Caco-2 (cell line): ENCODE measurements at regions of chr2 and their contacts with region 1.

Region 1: GRCh38 chr2:48589170-48589767 is 28.4 kb upstream of the GTF2A1L start:
- DNase-seq: peak in 1 of 2 experiments; percentile 61
- H3K4me3 ChIP-seq: no peak overlapping the region
- H3K4me3 Mint-ChIP-seq: no peak overlapping the region
- H3K27ac Mint-ChIP-seq: peak overlapping the region; percentile 29
- H3K4me1 ChIP-seq: peaks cover 21% of the 10 kb centered on the region
- H3K4me1 Mint-ChIP-seq: peaks cover 24% of the 10 kb centered on the region
- H3K27me3 ChIP-seq: no peaks in the 10 kb centered on the region
- H3K27me3 Mint-ChIP-seq: no peaks in the 10 kb centered on the region
- CTCF ChIP-seq: peak; percentile 75 to 85

Region 2: DNA sequence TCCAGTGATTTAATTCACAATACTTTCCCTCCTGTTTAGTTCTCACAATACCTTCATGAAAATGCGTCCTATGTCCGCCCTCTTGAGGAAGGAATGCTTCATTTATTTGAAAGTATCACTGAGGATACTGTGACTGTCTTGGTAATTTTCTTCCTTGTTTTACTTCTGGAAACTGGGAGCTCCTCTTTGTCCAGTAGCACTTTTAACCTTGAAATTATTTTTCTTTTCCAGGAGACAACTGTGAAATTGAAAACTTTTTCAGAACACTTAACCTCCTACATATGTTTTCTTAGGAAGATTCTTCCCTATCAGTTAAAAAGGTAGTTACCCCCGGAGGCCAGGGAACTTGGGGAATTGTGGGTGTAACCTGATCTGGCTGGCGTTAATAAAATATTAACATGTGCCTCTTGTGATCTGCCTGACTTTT is 118.2 kb before region 1 on chr2:
- CTCF ChIA-PET with region 1: no interaction called
- POLR2A ChIA-PET with region 1: no interaction called
- intact Hi-C with region 1: loop called (anchors 2 kb)
- DNase-seq: peak in 1 of 2 experiments; percentile 75
- H3K4me3 ChIP-seq: no peak overlapping the region
- H3K4me3 Mint-ChIP-seq: no peak overlapping the region
- H3K27ac Mint-ChIP-seq: no peak overlapping the region
- H3K4me1 ChIP-seq: peaks cover 8% of the 10 kb centered on the region; the same call in 1 of the 2 replicates
- H3K4me1 Mint-ChIP-seq: no peaks in the 10 kb centered on the region
- H3K27me3 ChIP-seq: no peaks in the 10 kb centered on the region
- H3K27me3 Mint-ChIP-seq: no peaks in the 10 kb centered on the region
- CTCF ChIP-seq: peak; percentile 73 to 80

Region 3: DNA sequence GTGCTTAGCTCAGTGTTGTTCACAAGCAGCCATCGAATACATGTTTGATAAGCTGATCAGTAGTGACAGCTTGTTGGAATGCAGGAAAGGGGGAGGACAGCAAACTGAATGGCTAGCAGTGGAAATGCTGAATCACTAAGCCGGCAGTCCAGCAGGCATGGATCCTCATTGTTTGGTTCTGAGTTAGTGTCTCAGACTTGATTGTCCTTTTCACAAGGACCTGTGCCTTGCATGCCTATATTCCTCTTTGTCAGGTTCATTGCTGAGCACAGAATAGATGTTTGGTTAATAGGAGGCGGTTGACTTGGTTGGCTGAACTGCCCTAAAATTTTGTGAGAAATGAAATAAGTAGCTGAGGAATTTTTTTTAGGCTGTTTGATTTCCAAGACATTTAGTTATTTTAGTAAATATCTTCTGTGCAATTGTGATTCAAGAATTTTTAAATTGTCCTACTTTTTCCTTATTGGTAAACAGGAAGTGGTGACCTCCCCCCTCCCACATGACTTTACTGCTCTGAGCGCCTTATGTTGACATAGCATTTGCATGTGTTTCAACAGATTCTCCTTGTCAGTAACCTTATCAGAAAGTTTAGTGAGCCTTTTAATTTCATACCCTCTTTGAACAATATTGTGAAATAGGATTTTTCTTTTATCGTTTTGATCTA is 80.7 kb before region 1 on chr2:
- CTCF ChIA-PET with region 1: no interaction called
- POLR2A ChIA-PET with region 1: no interaction called
- intact Hi-C with region 1: loop called (anchors 2 kb)
- DNase-seq: peak; percentile 49 to 54
- H3K4me3 ChIP-seq: no peak overlapping the region
- H3K4me3 Mint-ChIP-seq: peak overlapping the region; percentile 29
- H3K27ac Mint-ChIP-seq: peak overlapping the region; percentile 80
- H3K4me1 ChIP-seq: peaks cover 18% of the 10 kb centered on the region
- H3K4me1 Mint-ChIP-seq: peaks cover 13% of the 10 kb centered on the region
- H3K27me3 ChIP-seq: no peaks in the 10 kb centered on the region
- H3K27me3 Mint-ChIP-seq: no peaks in the 10 kb centered on the region
- CTCF ChIP-seq: no peak

Region 4: DNA sequence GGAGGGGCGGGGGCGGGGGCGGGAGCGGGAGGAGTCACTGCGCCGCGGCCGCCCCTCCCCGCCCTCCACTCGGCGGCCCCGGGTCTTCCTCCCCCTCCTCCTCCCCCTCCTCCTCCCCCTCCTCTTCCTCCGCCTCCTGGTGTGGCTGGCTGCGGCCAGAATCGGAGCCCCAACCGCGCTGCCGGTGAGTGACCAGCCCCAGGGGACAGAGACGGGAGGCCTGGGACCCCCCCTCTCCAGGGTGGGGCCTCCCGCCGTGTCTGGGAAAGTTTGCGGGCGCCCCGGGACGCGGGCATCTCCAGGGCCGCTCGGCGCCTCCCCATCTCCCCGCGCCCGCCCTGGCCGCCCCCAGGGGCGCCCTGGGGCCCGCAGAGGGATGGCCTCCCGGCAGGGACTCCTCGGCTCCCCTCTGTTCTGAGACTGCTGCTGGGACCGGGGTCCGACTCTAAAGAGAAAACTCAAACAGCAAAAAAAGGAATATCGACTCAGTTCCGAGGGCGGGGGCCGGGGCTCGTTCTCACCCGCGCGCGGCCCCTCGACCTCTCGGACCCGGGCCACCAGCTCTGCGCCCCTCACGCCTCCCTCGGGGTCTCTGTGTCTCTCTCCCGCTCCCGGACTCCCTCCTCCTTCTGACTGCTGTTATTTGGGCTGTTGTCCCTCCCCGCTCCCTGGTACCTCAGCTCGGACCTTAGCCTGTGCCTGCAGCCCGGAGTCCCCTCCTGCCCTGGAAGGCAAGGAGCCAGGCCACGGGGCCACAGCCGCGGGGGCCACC is 59.0 kb before region 1 on chr2 and contains the start of gene STON1:
- CTCF ChIA-PET with region 1: no interaction called
- POLR2A ChIA-PET with region 1: no interaction called
- intact Hi-C with region 1: loop called (anchors 2 kb)
- DNase-seq: peak; percentile 42 to 45
- H3K4me3 ChIP-seq: peak within 1 kb of the TSS; percentile 61
- H3K4me3 Mint-ChIP-seq: peak within 1 kb of the TSS; percentile 82
- H3K27ac Mint-ChIP-seq: no peak within 1 kb of the TSS
- H3K4me1 ChIP-seq: no peaks in the 10 kb centered on the region
- H3K4me1 Mint-ChIP-seq: peaks cover 7% of the 10 kb centered on the region
- H3K27me3 ChIP-seq: no peaks in the 10 kb centered on the region
- H3K27me3 Mint-ChIP-seq: no peaks in the 10 kb centered on the region
- CTCF ChIP-seq: peak in 1 of 2 experiments; percentile 9
- total RNA-seq, gene STON1: 1.5 and 1.8 TPM in 2 replicates

Region 5: DNA sequence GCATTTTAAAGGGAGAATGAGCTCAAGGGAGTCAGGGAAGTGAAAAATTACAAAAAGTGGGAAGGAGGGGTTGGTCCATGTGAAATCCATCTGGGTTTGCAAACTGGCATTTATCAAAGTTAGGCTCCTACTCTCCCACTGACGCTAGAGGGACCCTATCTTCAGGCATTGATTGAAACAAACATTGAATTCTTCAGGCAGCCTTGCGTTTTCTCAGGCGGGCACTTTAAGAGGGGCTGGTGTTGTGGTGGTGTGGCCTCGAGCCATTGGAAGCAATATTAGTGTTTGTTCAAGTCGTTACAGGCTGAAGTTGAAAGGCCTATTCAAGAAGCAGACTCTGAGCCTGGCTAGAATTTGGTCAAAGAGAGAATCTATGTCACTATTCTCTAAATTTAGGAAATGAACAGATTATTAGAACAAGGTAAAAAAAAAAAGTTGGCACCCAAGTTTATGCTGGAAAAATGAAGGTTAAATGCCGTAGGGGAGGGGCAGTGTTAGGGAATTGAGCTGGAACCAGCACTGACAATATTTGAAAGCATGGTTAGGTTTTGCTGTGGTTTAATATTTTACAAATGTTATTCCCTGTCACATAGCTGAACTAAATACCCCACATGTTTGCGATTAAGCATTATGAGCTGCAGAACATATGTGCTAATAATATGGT is 22.5 kb before region 1 on chr2:
- CTCF ChIA-PET with region 1: interaction called, 4 read pairs
- POLR2A ChIA-PET with region 1: no interaction called
- intact Hi-C with region 1: loop called (anchors 1 kb)
- DNase-seq: peak in 1 of 2 experiments; percentile 33
- H3K4me3 ChIP-seq: no peak overlapping the region
- H3K4me3 Mint-ChIP-seq: no peak overlapping the region
- H3K27ac Mint-ChIP-seq: no peak overlapping the region
- H3K4me1 ChIP-seq: no peaks in the 10 kb centered on the region
- H3K4me1 Mint-ChIP-seq: peaks cover 7% of the 10 kb centered on the region
- H3K27me3 ChIP-seq: no peaks in the 10 kb centered on the region
- H3K27me3 Mint-ChIP-seq: peaks cover 5% of the 10 kb centered on the region
- CTCF ChIP-seq: peak; percentile 43 to 61

Region 6: GRCh38 chr2:48651153-48651790 is 62.0 kb after region 1 on chr2:
- CTCF ChIA-PET with region 1: no interaction called
- POLR2A ChIA-PET with region 1: no interaction called
- intact Hi-C with region 1: no loop called
- DNase-seq: no peak
- H3K4me3 ChIP-seq: no peak overlapping the region
- H3K4me3 Mint-ChIP-seq: no peak overlapping the region
- H3K27ac Mint-ChIP-seq: no peak overlapping the region
- H3K4me1 ChIP-seq: no peaks in the 10 kb centered on the region
- H3K4me1 Mint-ChIP-seq: no peaks in the 10 kb centered on the region
- H3K27me3 ChIP-seq: no peaks in the 10 kb centered on the region
- H3K27me3 Mint-ChIP-seq: no peaks in the 10 kb centered on the region
- CTCF ChIP-seq: no peak